ENCODE measurements at regions of chr15 and their contacts with region 1.

Region 1: GRCh38 chr15:35078221-35078915 is 6.7 kb downstream of the NANOGP8 start:
- DNase-seq: peak; percentile 75
- CTCF ChIP-seq: peak; percentile 88

Region 2: DNA sequence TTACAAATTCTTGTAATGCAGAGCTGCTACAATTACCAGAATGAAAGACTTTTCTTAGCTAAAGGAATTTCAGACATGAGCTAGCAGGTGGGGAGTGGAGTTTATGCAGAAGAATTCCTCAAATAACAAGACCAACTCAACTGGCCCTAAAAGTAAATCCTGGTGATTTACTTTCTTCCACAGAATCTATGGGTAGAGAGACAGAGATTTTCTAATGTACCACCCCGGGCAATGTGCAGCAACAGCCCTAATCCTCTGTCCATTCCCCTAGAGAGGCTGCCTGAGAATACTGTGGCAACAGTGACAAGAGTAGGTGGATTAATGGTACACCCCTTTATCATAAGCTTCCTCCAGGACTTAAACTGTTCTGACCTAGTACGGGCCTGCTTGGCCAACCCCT is 164.1 kb before region 1 on chr15:
- in situ Hi-C with region 1: no loop called
- DNase-seq: no peak
- CTCF ChIP-seq: no peak

Region 3: GRCh38 chr15:35444557-35445204 is 366.3 kb after region 1 on chr15:
- in situ Hi-C with region 1: loop called (anchors 10 kb)
- DNase-seq: peak; percentile 42
- CTCF ChIP-seq: peak; percentile 75